H1 (cell line): ENCODE measurements at regions of chr13 and their contacts with region 1.

Region 1: DNA sequence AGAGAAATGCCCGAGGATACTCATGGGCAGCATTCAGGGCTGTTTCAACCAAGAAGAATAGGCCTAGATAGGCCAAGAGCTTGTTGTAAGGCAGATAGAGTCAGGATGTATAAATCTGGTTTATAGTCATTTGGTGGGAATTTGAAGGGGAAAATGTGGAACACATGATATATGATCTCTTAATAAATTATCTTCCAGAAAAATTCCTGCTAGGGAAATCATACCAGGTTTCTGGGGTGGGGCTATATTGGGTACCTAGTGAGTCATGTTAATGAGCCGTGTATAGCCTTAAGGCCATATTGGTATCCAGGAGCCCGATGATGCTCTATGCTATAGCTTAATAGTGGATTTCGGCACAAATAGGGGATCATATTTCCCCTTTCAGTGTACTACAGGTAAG is 51.5 kb upstream of the HTR2A start:
- DNase-seq: no peak
- H3K4me3 ChIP-seq: no peak overlapping the region
- H3K27ac ChIP-seq: no peak overlapping the region; the same call in 1 of the 2 replicates
- H3K4me1 ChIP-seq: peaks cover 0 to 7% (median 4%) of the 10 kb centered on the region in 4 experiments; a peak in 2 of 7 replicates
- H3K27me3 ChIP-seq: no peaks in the 10 kb centered on the region
- CTCF ChIP-seq: no peak
- EP300 ChIP-seq: no peak
- POLR2A ChIP-seq: no peak
- RAD21 ChIP-seq: no peak

Region 2: DNA sequence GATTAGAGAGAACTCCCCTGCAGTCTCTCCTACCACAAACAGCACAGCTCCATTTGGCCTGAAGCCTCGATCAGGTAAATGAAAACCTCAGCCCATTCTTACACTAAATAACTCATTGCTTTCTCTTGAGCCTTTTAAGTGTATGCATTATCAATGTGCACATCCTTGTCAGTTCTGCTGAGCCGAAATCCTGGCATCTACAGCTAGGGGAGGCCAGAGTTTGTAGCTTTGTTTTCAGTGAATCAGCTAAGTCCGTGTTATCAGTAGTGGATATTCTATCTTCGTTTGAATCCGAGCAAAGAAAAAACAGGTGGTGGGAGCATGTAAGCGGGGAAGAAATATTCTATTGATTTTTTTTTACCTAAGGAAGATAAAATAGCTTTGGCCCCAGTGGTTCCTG is 235.8 kb before region 1 on chr13:
- CTCF ChIA-PET with region 1: no interaction called
- POLR2A ChIA-PET with region 1: no interaction called
- DNase-seq: no peak
- H3K4me3 ChIP-seq: no peak overlapping the region
- H3K27ac ChIP-seq: no peak overlapping the region
- H3K4me1 ChIP-seq: peaks cover 0 to 4% (median 0%) of the 10 kb centered on the region in 4 experiments; a peak in 1 of 7 replicates
- H3K27me3 ChIP-seq: no peaks in the 10 kb centered on the region
- CTCF ChIP-seq: peak in 1 of 3 experiments; percentile 40; a peak in 1 of 4 replicates
- EP300 ChIP-seq: no peak
- POLR2A ChIP-seq: no peak
- RAD21 ChIP-seq: peak in 1 of 2 experiments; percentile 16; a peak in 1 of 4 replicates

Region 3: GRCh38 chr13:46756977-46757376 is 191.4 kb before region 1 on chr13:
- CTCF ChIA-PET with region 1: no interaction called
- POLR2A ChIA-PET with region 1: no interaction called
- DNase-seq: no peak
- H3K4me3 ChIP-seq: no peak overlapping the region
- H3K27ac ChIP-seq: no peak overlapping the region
- H3K4me1 ChIP-seq: no peaks in the 10 kb centered on the region
- H3K27me3 ChIP-seq: no peaks in the 10 kb centered on the region
- CTCF ChIP-seq: no peak
- EP300 ChIP-seq: no peak
- POLR2A ChIP-seq: no peak
- RAD21 ChIP-seq: no peak

Region 4: DNA sequence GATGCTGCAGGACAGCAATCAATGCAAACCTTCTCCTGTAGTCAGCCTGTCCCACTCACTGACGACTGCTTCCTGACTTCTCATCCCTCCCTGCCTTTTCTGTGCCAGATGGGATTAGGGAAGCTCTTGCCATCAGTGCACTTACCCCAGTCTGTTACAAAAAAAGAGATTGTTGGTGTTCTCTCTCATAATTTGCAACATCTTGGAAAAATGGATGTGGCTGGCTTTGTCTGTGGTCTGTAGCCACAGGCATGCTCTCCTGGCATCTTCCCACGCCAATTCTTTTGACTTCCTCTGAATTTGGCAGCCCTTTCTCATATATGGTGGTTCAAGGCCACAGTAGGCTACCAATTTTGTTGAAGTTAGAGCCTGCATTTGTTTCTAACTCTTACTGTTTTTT is 39.8 kb before region 1 on chr13:
- CTCF ChIA-PET with region 1: no interaction called
- POLR2A ChIA-PET with region 1: no interaction called
- DNase-seq: no peak
- H3K4me3 ChIP-seq: no peak overlapping the region
- H3K27ac ChIP-seq: no peak overlapping the region
- H3K4me1 ChIP-seq: no peaks in the 10 kb centered on the region
- H3K27me3 ChIP-seq: no peaks in the 10 kb centered on the region
- CTCF ChIP-seq: no peak
- EP300 ChIP-seq: no peak
- POLR2A ChIP-seq: no peak
- RAD21 ChIP-seq: no peak

Region 5: DNA sequence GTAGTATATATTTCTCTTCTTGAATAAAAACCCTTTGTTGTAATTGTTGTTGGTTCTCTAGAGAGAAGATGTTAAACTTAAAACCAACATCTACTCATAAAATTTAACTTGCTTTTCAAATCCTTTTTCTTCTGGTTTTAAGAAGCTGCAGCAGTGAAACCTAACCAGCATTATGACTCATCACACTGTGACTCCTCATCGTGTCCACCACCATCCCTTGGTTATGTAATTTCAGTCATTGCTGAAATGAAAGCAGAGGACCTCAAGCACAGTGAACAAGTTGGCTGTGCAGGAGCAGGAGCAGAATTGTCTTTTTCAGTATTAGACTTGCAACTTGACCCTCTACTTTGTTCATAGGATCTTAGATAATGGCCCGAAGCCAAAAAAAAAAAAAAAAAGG is 13.4 kb after region 1 on chr13:
- CTCF ChIA-PET with region 1: interaction called, 16 read pairs
- POLR2A ChIA-PET with region 1: no interaction called
- DNase-seq: no peak
- H3K4me3 ChIP-seq: no peak overlapping the region
- H3K27ac ChIP-seq: no peak overlapping the region
- H3K4me1 ChIP-seq: no peaks in the 10 kb centered on the region
- H3K27me3 ChIP-seq: no peaks in the 10 kb centered on the region
- CTCF ChIP-seq: no peak
- EP300 ChIP-seq: no peak
- POLR2A ChIP-seq: no peak
- RAD21 ChIP-seq: no peak